AG04450 (cell line): ENCODE measurements at regions of chr2 and their contacts with region 1.

Region 1: DNA sequence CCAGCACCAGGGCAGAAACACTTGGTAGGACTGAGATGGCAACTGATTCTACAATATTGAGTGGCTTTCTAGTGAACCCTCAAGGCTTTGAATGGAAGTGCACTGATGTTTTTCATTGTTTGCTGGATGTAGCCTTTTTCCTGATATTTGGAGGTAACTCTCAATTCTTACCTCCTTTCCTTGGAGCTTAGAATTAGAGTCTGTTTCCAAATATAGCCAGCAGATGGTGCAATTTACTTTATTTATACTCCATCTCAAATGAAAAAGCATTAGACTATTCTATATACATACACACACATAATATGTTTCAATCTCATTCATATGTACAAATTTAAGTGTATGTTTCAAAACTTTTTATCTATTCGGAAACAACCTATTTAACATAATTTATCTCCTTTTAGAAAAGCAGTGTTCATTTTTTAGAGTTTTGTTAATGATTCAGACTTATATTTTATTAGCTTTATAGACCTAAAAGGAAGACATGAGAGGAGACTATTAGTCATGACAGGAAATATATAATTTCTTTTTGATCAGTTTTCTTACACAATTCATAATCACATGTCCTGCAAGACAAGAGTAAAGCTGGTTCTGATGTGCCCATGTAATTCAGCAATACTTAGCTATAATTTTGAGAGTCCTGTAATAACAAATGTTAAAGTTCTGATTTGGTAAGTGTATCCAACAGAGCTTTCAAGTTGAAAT is 124.8 kb downstream of the NUP35 start:
- DNase-seq: no peak
- H3K4me3 ChIP-seq: no peak overlapping the region
- H3K27ac ChIP-seq: no peak overlapping the region
- H3K27me3 ChIP-seq: no peaks in the 10 kb centered on the region
- CTCF ChIP-seq: peak; percentile 56

Region 2: DNA sequence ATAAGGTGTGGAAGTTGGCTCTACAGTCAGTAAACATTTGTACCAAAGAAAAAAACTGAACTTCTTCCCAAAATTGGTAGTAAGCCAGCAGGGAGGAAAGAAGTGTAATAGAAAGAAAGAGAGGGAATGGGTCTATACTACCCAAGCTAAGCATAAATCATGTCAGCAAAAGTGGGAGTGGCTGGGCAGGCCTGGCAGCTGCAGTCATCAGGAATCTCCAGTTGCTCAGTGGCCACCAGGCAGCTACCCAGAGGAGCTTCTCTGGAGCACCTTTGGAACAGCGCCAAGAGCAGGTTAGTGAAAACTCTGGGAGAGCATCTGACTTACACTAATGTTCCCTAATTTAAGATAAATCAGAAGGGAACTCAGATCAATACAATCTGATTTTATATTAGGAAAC is 396.9 kb before region 1 on chr2:
- CTCF ChIA-PET with region 1: no interaction called
- POLR2A ChIA-PET with region 1: no interaction called
- DNase-seq: no peak
- H3K4me3 ChIP-seq: no peak overlapping the region
- H3K27ac ChIP-seq: no peak overlapping the region
- H3K27me3 ChIP-seq: peaks cover 6% of the 10 kb centered on the region
- CTCF ChIP-seq: no peak

Region 3: GRCh38 chr2:183232161-183232865 is 16.7 kb before region 1 on chr2:
- CTCF ChIA-PET with region 1: interaction called, 16 read pairs
- POLR2A ChIA-PET with region 1: no interaction called
- DNase-seq: no peak
- H3K4me3 ChIP-seq: no peak overlapping the region
- H3K27ac ChIP-seq: no peak overlapping the region
- H3K27me3 ChIP-seq: no peaks in the 10 kb centered on the region
- CTCF ChIP-seq: no peak

Region 4: DNA sequence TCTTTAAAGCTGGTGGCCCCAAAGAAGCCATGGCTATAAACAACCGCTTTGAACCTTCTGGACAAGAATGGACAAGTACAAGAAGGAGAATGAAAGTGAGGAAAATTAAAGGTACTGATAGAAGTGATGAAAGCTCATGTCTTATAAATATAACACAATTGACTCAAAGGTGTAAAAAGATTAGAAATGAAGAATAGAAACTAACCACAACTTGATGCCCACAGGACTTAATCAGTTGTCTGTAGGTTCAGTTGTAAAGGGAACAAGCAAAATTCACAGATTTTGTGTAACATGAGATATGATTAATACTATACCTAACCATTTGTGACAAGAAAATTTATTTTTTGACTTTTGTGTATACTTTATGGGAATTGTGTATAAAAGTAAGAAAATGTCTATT is 10.9 kb after region 1 on chr2:
- CTCF ChIA-PET with region 1: interaction called, 12 read pairs
- POLR2A ChIA-PET with region 1: no interaction called
- DNase-seq: no peak
- H3K4me3 ChIP-seq: no peak overlapping the region
- H3K27ac ChIP-seq: no peak overlapping the region
- H3K27me3 ChIP-seq: no peaks in the 10 kb centered on the region
- CTCF ChIP-seq: no peak

Region 5: DNA sequence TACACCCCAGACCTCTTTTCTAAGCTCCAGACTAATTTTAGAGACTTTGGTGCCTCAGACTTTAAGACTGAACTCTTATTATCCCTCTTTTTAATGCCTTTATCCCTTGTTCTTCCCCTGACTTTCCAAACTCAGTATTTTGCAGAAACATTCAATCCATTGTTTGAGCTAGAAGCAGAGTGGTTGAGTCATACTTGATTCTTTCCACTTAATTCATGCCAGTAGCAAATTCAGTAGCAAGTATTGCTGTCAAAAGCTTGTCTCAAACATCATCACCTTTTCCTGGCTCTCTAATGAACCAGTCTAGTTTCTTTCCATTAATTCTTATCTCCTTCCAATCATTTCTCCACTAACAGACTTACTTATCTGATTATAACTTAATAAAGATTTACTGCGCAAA is 649.6 kb after region 1 on chr2:
- CTCF ChIA-PET with region 1: no interaction called
- POLR2A ChIA-PET with region 1: no interaction called
- DNase-seq: no peak
- H3K4me3 ChIP-seq: no peak overlapping the region
- H3K27ac ChIP-seq: no peak overlapping the region
- H3K27me3 ChIP-seq: no peaks in the 10 kb centered on the region
- CTCF ChIP-seq: no peak